Psoas muscle (tissue), 8 donors: ENCODE measurements at regions of chr7 and their contacts with region 1.

Region 1: DNA sequence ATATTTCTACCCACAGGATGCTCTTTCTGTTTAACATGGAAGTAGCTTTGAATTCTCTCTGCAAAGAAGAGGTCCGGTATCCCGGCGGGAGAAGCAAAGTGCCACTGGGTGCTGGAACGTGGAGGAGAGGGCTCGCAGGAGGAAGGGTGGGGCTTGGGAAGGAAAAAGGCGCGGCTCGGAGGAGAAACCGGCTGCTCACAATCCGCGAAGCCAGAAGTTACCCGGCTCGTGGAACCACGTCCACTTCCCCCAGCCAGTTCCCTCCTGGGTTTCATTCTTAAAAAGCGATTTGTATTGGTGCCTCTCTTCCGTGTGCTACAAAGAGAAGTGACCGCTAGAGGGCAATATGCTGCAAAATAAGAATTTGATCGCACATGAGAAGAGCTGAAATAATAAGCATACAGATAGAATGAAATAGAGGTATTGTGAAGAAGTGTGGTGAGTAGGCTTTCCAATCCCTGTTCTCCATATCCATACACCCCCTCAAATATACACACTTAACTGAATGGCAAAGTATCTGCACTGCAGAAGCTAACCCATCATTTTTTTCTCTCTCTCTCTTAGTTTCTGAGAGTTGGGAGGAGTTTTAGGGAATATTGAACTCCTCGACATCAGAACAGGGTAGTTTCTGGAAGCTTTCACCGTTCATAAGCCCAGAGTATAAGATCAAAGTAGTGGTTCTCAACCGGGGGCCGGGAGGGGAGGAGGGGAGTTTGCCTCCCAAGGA is 31.1 kb downstream of the TRIL start:
- DNase-seq: peak; percentile 66 to 78
- ATAC-seq: peak; percentile 78 to 87 (median 84)
- H3K4me3 ChIP-seq: peak overlapping the region; percentile 61
- H3K27ac ChIP-seq: no peak overlapping the region
- H3K4me1 ChIP-seq: peaks cover 10% of the 10 kb centered on the region
- H3K27me3 ChIP-seq: no peaks in the 10 kb centered on the region
- CTCF ChIP-seq: peak; percentile 81

Region 2: DNA sequence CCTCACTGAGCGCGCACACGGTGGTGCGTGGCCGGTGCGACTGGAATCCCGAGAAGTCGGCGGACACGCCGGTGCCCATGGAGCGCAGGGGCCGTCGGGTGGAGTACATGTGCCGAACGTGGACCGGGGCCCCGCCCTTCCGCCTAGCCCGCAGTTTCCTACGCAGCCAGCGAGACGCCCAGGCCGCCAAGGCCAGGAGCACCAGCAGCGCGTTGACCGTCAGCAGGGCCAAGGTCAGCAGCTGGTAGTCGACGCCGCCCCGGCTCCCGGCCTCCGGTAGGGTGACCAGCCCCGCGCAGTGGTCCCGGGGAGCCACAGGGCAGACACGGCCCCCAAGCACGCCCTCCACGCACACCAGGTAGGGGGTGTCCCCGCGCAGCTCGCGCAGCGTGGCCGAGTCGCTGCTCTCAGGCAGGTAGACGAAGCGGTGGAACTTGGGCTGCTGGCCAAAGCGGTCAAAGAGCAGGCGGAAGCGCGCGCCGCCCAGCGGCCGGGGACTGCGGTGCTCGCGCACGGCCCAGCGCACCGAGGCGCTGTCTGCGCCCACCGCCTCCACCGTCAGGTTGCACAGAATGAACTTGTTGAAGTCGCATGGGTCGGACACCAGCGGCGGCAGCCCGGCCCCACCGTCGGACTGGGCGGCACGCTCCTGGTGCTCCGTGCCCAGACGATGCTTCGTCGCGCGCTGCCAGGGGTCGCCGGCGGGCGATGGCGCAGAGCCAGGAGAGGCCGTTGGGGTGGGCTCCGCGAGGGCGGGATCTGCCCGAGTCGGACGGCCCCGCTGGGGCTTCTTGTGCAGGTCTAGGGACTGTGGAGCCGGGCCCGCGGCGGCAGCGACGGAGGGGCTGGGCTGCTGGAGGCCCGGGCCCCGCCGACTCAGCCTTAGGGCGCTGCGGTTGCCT is 28.9 kb after region 1 on chr7:
- intact Hi-C with region 1: loop called in 1 of 2 experiments (anchors 2 kb)
- DNase-seq: peak; percentile 82 to 90
- ATAC-seq: peak; percentile 79 to 85 (median 82)
- H3K4me3 ChIP-seq: peak overlapping the region; percentile 78
- H3K27ac ChIP-seq: no peak overlapping the region
- H3K4me1 ChIP-seq: peaks cover 16% of the 10 kb centered on the region
- H3K27me3 ChIP-seq: peaks cover 0 to 21% (median 5%) of the 10 kb centered on the region in 3 donors
- CTCF ChIP-seq: peak; percentile 75

Region 3: GRCh38 chr7:29013082-29013695 is 86.2 kb after region 1 on chr7:
- intact Hi-C with region 1: no loop called
- DNase-seq: no peak
- ATAC-seq: no peak
- H3K4me3 ChIP-seq: no peak overlapping the region
- H3K27ac ChIP-seq: no peak overlapping the region
- H3K4me1 ChIP-seq: no peaks in the 10 kb centered on the region
- H3K27me3 ChIP-seq: no peaks in the 10 kb centered on the region
- CTCF ChIP-seq: no peak